Naive thymus-derived CD4-positive, alpha-beta T cell (primary cell): ENCODE measurements at regions of chr9 and their contacts with region 1.

Region 1: DNA sequence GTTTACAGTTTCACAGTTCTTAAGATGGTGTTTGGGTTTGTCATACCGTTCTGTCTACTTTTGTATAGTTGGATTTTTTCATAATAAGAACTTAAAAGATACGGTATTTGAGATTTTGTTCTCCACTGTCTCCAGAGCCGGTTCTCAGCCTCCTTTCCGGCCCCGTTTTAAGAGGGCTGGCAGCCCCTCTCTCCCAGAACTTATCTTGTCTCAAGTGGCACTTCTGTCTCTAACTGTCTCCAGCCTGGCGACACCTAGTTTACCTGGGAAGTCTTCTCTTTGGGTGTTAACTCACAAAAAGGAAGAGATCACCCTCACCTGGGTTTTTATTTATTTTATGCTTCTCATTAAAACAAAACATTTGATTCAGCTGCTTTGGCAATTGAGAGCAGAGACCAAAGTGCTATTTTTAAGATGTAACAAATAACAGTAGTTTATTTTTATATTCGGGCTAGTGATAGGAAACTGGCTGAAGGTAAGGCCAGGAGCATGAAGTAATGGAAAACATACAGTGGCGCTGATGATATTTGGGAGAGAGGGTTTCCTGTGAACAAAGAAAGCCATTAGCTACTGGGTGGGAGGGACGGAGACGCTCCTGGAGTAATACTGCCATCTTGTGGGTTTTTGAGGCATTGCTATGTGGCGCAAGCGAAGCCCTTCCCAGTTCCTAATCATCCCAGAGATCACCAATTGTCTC is 48.3 kb downstream of the ACER2 start:
- DNase-seq: peak; percentile 18 to 70 (median 57)
- ATAC-seq: peak; percentile 92
- H3K4me3 ChIP-seq: no peak overlapping the region
- H3K4me3 Mint-ChIP-seq: peak overlapping the region in 7 of 10 donors; percentile 9 to 68 (median 48)
- H3K27ac ChIP-seq: no peak overlapping the region
- H3K27ac Mint-ChIP-seq: peak overlapping the region in 1 of 9 donors; percentile 22
- H3K4me1 ChIP-seq: peaks cover 0 to 9% of the 10 kb centered on the region in 2 donors
- H3K4me1 Mint-ChIP-seq: peaks cover 7 to 12% (median 8%) of the 10 kb centered on the region in 7 donors
- H3K27me3 ChIP-seq: no peaks in the 10 kb centered on the region
- H3K27me3 Mint-ChIP-seq: peaks cover 0 to 8% (median 0%) of the 10 kb centered on the region in 5 donors

Region 2: GRCh38 chr9:18569941-18570630 is 887.1 kb before region 1 on chr9:
- CTCF ChIA-PET with region 1: no interaction called
- POLR2A ChIA-PET with region 1: no interaction called
- intact Hi-C with region 1: loop called in 1 of 2 experiments (anchors 10 kb)
- DNase-seq: no peak
- ATAC-seq: no peak
- H3K4me3 ChIP-seq: no peak overlapping the region
- H3K4me3 Mint-ChIP-seq: no peak overlapping the region
- H3K27ac ChIP-seq: no peak overlapping the region
- H3K27ac Mint-ChIP-seq: no peak overlapping the region
- H3K4me1 ChIP-seq: no peaks in the 10 kb centered on the region
- H3K4me1 Mint-ChIP-seq: no peaks in the 10 kb centered on the region
- H3K27me3 ChIP-seq: no peaks in the 10 kb centered on the region
- H3K27me3 Mint-ChIP-seq: peaks cover 0 to 2% (median 0%) of the 10 kb centered on the region in 5 donors

Region 3: GRCh38 chr9:19085295-19085694 is 371.8 kb before region 1 on chr9:
- CTCF ChIA-PET with region 1: interaction called, 14 read pairs
- POLR2A ChIA-PET with region 1: no interaction called
- intact Hi-C with region 1: loop called (anchors 1 kb)
- DNase-seq: peak in 7 of 9 donors; percentile 31 to 60 (median 52)
- ATAC-seq: peak; percentile 83
- H3K4me3 ChIP-seq: no peak overlapping the region
- H3K4me3 Mint-ChIP-seq: no peak overlapping the region
- H3K27ac ChIP-seq: no peak overlapping the region
- H3K27ac Mint-ChIP-seq: no peak overlapping the region
- H3K4me1 ChIP-seq: no peaks in the 10 kb centered on the region
- H3K4me1 Mint-ChIP-seq: peaks cover 0 to 7% (median 5%) of the 10 kb centered on the region in 7 donors
- H3K27me3 ChIP-seq: no peaks in the 10 kb centered on the region
- H3K27me3 Mint-ChIP-seq: no peaks in the 10 kb centered on the region

Region 4: GRCh38 chr9:19174127-19174912 is 282.8 kb before region 1 on chr9:
- CTCF ChIA-PET with region 1: interaction called, 3 read pairs
- POLR2A ChIA-PET with region 1: no interaction called
- intact Hi-C with region 1: loop called (anchors 1 kb)
- DNase-seq: peak; percentile 11 to 51 (median 37)
- ATAC-seq: peak; percentile 91
- H3K4me3 ChIP-seq: no peak overlapping the region
- H3K4me3 Mint-ChIP-seq: peak overlapping the region in 3 of 10 donors; percentile 14 to 70 (median 63)
- H3K27ac ChIP-seq: no peak overlapping the region
- H3K27ac Mint-ChIP-seq: peak overlapping the region in 5 of 9 donors; percentile 52 to 84 (median 62)
- H3K4me1 ChIP-seq: peaks cover 5 to 16% of the 10 kb centered on the region in 2 donors
- H3K4me1 Mint-ChIP-seq: peaks cover 25 to 39% (median 31%) of the 10 kb centered on the region in 7 donors
- H3K27me3 ChIP-seq: no peaks in the 10 kb centered on the region
- H3K27me3 Mint-ChIP-seq: no peaks in the 10 kb centered on the region

Region 5: GRCh38 chr9:19320495-19320894 is 136.6 kb before region 1 on chr9:
- CTCF ChIA-PET with region 1: no interaction called
- POLR2A ChIA-PET with region 1: no interaction called
- intact Hi-C with region 1: loop called in 1 of 2 experiments (anchors 5 kb)
- DNase-seq: no peak
- ATAC-seq: no peak
- H3K4me3 ChIP-seq: no peak overlapping the region
- H3K4me3 Mint-ChIP-seq: no peak overlapping the region
- H3K27ac ChIP-seq: no peak overlapping the region
- H3K27ac Mint-ChIP-seq: no peak overlapping the region
- H3K4me1 ChIP-seq: no peaks in the 10 kb centered on the region
- H3K4me1 Mint-ChIP-seq: peaks cover 0 to 12% (median 6%) of the 10 kb centered on the region in 7 donors
- H3K27me3 ChIP-seq: no peaks in the 10 kb centered on the region
- H3K27me3 Mint-ChIP-seq: no peaks in the 10 kb centered on the region

Region 6: GRCh38 chr9:19408693-19409400 is 48.3 kb before region 1 on chr9 and contains the start of gene ACER2:
- CTCF ChIA-PET with region 1: interaction called, 3 read pairs
- POLR2A ChIA-PET with region 1: no interaction called
- intact Hi-C with region 1: loop called (anchors 1 to 2 kb)
- DNase-seq: peak; percentile 91 to 99 (median 95)
- ATAC-seq: peak; percentile 99
- H3K4me3 ChIP-seq: peak within 1 kb of the TSS; percentile 96
- H3K4me3 Mint-ChIP-seq: peak within 1 kb of the TSS; percentile 92 to 99 (median 94)
- H3K27ac ChIP-seq: peak within 1 kb of the TSS; percentile 72
- H3K27ac Mint-ChIP-seq: peak within 1 kb of the TSS; percentile 74 to 94 (median 82)
- H3K4me1 ChIP-seq: peaks cover 0 to 6% of the 10 kb centered on the region in 2 donors
- H3K4me1 Mint-ChIP-seq: peaks cover 8 to 30% (median 19%) of the 10 kb centered on the region in 7 donors
- H3K27me3 ChIP-seq: no peaks in the 10 kb centered on the region
- H3K27me3 Mint-ChIP-seq: peaks cover 0 to 9% (median 0%) of the 10 kb centered on the region in 5 donors
- total RNA-seq, gene ACER2: 2.0 to 5.7 (median 2.8) TPM